CD14-positive monocyte (primary cell): ENCODE measurements at regions of chr7 and their contacts with region 1.

Region 1: GRCh38 chr7:130069978-130070860 is at the start of gene KLHDC10:
- DNase-seq: peak; percentile 97 to 98 (median 98)
- H3K4me3 ChIP-seq: peak within 1 kb of the TSS; percentile 89 to 94 (median 91)
- H3K4me3 Mint-ChIP-seq: peak within 1 kb of the TSS; percentile 89 to 94
- H3K27ac ChIP-seq: peak within 1 kb of the TSS; percentile 63 to 79
- H3K27ac Mint-ChIP-seq: peak within 1 kb of the TSS; percentile 77 to 94 (median 94)
- H3K4me1 ChIP-seq: peaks cover 21 to 25% of the 10 kb centered on the region in 2 donors
- H3K4me1 Mint-ChIP-seq: peaks cover 36% of the 10 kb centered on the region
- H3K27me3 ChIP-seq: no peaks in the 10 kb centered on the region
- H3K27me3 Mint-ChIP-seq: peaks cover 0 to 3% (median 0%) of the 10 kb centered on the region in 3 donors
- CTCF ChIP-seq: no peak
- polyA plus RNA-seq, gene KLHDC10: 1.1 to 13.9 (median 2.9) TPM

Region 2: DNA sequence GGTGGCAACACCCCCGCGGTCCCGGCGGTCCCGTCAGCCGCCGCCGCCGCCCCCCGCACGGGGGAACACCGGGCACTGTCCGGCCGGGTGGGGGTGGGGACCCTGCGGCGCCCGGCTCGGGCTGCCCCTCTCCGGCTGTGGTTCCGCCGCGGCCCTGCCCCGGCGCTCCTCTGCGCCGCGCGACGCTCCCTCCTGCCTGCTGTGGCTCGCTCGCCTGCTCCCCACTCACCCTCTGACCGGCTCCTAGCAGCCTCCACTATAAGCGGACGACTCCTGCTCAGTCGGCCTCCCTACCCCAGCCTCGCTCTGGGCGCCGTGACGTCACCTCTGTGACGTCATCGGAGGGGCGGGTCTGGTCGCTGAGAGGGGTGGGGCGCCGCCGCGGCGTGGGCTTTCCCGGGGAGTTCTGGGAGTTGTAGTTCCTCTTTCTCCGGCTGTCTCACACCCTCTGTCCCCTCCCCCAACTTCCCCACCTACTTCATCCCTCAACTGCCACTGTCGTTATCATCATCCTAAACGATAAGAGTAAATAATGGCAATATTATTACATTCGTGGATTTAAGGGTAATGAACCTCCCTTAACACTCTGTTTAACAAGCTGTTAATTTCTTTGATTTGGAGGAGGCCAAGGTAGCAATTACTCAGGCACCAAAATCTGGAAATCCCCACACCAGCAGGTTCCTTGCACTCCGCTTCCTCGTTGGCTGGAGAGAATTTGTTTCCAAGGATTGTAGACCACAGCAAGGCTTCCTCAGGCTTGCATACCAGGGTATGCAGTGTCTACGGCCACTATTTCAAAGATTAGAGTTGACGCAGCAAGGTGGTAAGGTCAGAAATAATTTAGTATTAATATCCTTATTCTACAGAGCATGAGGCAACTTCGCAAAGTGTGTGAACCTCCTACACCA is 117.3 kb before region 1 on chr7 and contains the start of gene UBE2H:
- intact Hi-C with region 1: loop called in 1 of 2 experiments (anchors 5 kb)
- DNase-seq: peak; percentile 84 to 95 (median 94)
- H3K4me3 ChIP-seq: peak within 1 kb of the TSS; percentile 89 to 96 (median 91)
- H3K4me3 Mint-ChIP-seq: peak within 1 kb of the TSS; percentile 94 to 98
- H3K27ac ChIP-seq: peak within 1 kb of the TSS; percentile 80 to 89
- H3K27ac Mint-ChIP-seq: peak within 1 kb of the TSS in 6 of 7 donors; percentile 97 to 100 (median 99)
- H3K4me1 ChIP-seq: peaks cover 34 to 37% of the 10 kb centered on the region in 2 donors
- H3K4me1 Mint-ChIP-seq: peaks cover 6% of the 10 kb centered on the region
- H3K27me3 ChIP-seq: no peaks in the 10 kb centered on the region
- H3K27me3 Mint-ChIP-seq: peaks cover 1 to 4% (median 2%) of the 10 kb centered on the region in 3 donors
- CTCF ChIP-seq: no peak
- polyA plus RNA-seq, gene UBE2H: 12.6 to 26.0 (median 16.0) TPM

Region 3: GRCh38 chr7:130758429-130759056 is 688.3 kb after region 1 on chr7:
- intact Hi-C with region 1: loop called in 1 of 2 experiments (anchors 10 kb)
- DNase-seq: peak; percentile 43 to 54 (median 43)
- H3K4me3 ChIP-seq: no peak overlapping the region
- H3K4me3 Mint-ChIP-seq: no peak overlapping the region
- H3K27ac ChIP-seq: no peak overlapping the region
- H3K27ac Mint-ChIP-seq: no peak overlapping the region
- H3K4me1 ChIP-seq: no peaks in the 10 kb centered on the region
- H3K4me1 Mint-ChIP-seq: no peaks in the 10 kb centered on the region
- H3K27me3 ChIP-seq: peaks cover 0 to 4% of the 10 kb centered on the region in 2 donors
- H3K27me3 Mint-ChIP-seq: peaks cover 5 to 14% (median 13%) of the 10 kb centered on the region in 3 donors
- CTCF ChIP-seq: peak; percentile 84

Region 4: DNA sequence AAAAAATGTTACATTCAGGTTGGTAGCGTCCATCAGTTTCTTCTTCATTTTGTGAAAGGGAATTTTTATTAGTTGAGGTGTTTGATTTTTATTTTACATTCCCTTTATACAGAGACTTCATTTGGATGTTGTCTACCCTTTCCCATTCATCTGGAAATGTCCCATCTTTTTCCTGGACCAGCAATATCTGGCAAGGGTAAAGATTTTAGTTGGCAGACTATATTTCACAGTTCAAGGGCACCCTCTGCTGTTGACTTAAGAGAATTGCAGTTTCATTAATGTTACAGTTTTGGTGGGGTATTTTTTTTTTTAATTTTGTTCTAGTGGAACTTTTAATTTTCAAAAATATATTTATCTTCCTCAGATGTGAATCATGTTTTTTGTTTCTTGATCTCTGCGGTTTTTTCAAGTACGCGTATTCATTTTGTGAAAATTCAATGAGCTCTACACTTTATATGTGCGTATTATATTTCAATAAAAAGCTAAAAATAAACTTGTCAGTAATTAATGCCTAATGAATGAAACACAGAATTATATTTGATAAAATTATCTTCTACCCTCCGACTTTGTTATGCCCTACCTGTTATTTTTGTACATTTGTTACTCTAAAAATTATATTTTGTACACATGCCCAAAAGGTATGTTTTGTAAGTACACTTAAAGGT is 761.7 kb after region 1 on chr7:
- intact Hi-C with region 1: loop called (anchors 5 to 10 kb)
- DNase-seq: peak; percentile 6 to 35 (median 30)
- H3K4me3 ChIP-seq: no peak overlapping the region
- H3K4me3 Mint-ChIP-seq: no peak overlapping the region
- H3K27ac ChIP-seq: no peak overlapping the region
- H3K27ac Mint-ChIP-seq: no peak overlapping the region
- H3K4me1 ChIP-seq: no peaks in the 10 kb centered on the region
- H3K4me1 Mint-ChIP-seq: no peaks in the 10 kb centered on the region
- H3K27me3 ChIP-seq: no peaks in the 10 kb centered on the region
- H3K27me3 Mint-ChIP-seq: peaks cover 0 to 3% (median 1%) of the 10 kb centered on the region in 3 donors
- CTCF ChIP-seq: peak; percentile 84